ENCODE measurements at regions of chr7 and their contacts with region 1.

Region 1: DNA sequence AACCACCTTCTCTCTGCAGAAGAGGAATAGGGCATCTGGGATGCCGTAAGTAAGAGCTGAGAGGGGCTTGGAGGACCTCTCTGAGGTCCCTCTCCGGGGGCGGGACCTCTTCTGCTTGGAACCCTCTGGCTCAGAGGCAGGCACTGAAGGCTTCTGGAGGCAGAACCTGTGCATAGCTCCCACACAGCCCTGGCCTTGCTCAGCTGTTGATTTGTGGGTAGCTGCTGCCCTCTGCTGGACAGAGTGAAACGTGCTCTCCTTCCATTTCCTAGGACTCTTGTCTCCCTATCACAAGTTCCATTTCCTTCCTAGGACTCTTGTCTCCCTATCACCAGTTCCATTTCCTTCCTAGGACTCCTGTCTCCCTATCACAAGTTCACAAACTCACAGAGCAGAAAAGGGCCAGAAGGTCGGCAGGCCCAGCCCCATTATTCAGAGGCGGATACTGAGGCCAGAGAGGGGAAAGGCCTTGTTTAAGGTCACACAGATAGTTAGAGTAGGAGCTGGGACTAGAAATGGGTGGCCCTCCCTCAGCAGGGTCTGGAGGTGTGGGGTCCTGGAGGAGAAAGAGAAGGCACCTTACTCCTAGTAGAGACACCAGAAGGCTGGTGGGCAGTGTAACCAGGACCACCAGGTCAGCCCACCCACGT is 30.3 kb upstream of the GARS1 start:
- DNase-seq: peak; percentile 72 to 81
- ATAC-seq: peak; percentile 88 to 94 (median 93)
- H3K4me3 ChIP-seq: no peak overlapping the region
- H3K27ac ChIP-seq: no peak overlapping the region
- H3K4me1 ChIP-seq: peaks cover 0 to 21% (median 0%) of the 10 kb centered on the region in 9 donors
- H3K27me3 ChIP-seq: no peaks in the 10 kb centered on the region
- CTCF ChIP-seq: peak; percentile 69 to 89 (median 86)

Region 2: DNA sequence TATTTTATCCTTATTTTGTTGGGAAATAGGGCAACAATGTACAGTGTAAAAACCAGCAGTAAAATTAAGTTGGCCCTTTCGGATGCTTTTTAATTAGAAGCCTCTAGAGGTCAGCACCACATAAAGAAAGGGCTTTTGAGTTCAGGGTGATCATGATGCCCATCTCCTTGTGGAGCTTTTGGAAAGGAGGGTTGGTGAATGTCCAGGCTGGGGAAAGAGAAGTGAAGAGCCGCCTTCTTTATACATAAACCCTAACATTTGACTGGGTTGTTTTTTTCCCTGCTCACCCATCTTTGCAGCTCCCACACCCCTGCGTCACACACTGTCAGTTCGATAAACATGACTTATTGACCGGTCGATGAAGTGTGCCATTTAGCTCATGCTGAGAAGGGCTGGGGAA is 399.8 kb before region 1 on chr7:
- intact Hi-C with region 1: loop called in 9 of 10 experiments (anchors 2 to 10 kb)
- DNase-seq: no peak
- ATAC-seq: peak; percentile 11 to 73 (median 64)
- H3K4me3 ChIP-seq: no peak overlapping the region
- H3K27ac ChIP-seq: peak overlapping the region in 3 of 10 donors; percentile 33 to 76 (median 57)
- H3K4me1 ChIP-seq: peaks cover 0 to 82% (median 30%) of the 10 kb centered on the region in 9 donors
- H3K27me3 ChIP-seq: no peaks in the 10 kb centered on the region
- CTCF ChIP-seq: peak; percentile 33 to 76 (median 70)

Region 3: GRCh38 chr7:30255064-30255769 is 309.2 kb before region 1 on chr7:
- intact Hi-C with region 1: no loop called
- DNase-seq: no peak
- ATAC-seq: peak in 3 of 8 donors; percentile 19 to 45 (median 34)
- H3K4me3 ChIP-seq: no peak overlapping the region
- H3K27ac ChIP-seq: no peak overlapping the region
- H3K4me1 ChIP-seq: peaks cover 0 to 34% (median 22%) of the 10 kb centered on the region in 9 donors
- H3K27me3 ChIP-seq: no peaks in the 10 kb centered on the region
- CTCF ChIP-seq: no peak

Region 4: DNA sequence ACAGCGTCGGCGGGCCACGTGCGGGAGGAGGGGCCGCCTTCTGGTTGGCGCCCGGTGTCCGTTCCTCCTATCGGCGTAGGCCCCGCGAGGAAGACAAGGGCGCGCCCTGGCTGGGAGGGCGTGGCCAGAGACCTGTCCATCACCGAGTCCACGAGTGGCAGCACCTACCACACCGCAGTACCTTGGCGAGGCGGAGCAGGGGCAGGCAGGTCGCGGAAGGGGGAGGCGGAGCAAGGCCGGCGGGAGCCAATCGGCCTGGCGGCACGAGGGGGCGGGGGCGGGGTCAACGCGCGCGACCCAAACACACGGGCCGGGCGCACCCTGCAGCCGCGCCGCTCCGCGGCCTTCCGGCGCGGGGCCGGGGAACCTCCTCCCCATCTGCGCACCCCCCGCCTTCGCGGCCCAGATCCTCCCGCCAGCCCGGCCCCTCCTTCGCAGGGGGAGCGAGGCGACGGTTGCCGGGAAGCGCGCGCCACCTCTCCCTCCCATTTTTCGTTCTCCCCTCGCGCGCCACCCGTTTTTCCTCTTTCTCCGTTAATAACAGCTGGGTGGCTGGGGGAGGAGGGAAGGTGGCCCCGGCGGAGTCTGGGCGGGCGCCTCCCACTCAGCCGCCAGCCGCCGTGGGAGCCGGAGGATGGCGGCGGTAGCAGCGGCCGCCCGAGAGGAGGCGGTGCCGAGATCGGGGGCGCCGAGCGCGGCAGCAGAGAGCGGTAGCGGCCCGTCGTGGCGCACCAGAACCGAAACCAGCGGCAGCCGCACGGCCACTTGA is 279.9 kb before region 1 on chr7 and contains the start of gene ZNRF2:
- intact Hi-C with region 1: loop called in 9 of 10 experiments (anchors 5 to 10 kb)
- DNase-seq: peak; percentile 98
- ATAC-seq: peak; percentile 92 to 99 (median 98)
- H3K4me3 ChIP-seq: peak within 1 kb of the TSS; percentile 45 to 95 (median 81)
- H3K27ac ChIP-seq: peak within 1 kb of the TSS; percentile 83 to 99 (median 98)
- H3K4me1 ChIP-seq: peaks cover 4 to 42% (median 29%) of the 10 kb centered on the region in 9 donors
- H3K27me3 ChIP-seq: no peaks in the 10 kb centered on the region
- CTCF ChIP-seq: peak; percentile 11 to 83 (median 53)
- total RNA-seq, gene ZNRF2: 5.3 to 13.8 (median 8.8) TPM

Region 5: GRCh38 chr7:30433082-30433481 is 131.3 kb before region 1 on chr7:
- intact Hi-C with region 1: loop called in 1 of 10 experiments (anchors 10 kb)
- DNase-seq: peak; percentile 38 to 52
- ATAC-seq: peak; percentile 70 to 84 (median 78)
- H3K4me3 ChIP-seq: no peak overlapping the region
- H3K27ac ChIP-seq: peak overlapping the region in 6 of 10 donors; percentile 0 to 81 (median 54)
- H3K4me1 ChIP-seq: peaks cover 9 to 87% (median 34%) of the 10 kb centered on the region in 9 donors
- H3K27me3 ChIP-seq: no peaks in the 10 kb centered on the region
- CTCF ChIP-seq: no peak

Region 6: GRCh38 chr7:30548762-30549344 is 15.5 kb before region 1 on chr7:
- intact Hi-C with region 1: loop called in 4 of 10 experiments (anchors 1 to 2 kb)
- DNase-seq: peak; percentile 26 to 75
- ATAC-seq: peak; percentile 50 to 85 (median 78)
- H3K4me3 ChIP-seq: no peak overlapping the region
- H3K27ac ChIP-seq: peak overlapping the region in 8 of 10 donors; percentile 61 to 84 (median 67)
- H3K4me1 ChIP-seq: peaks cover 0 to 34% (median 22%) of the 10 kb centered on the region in 9 donors
- H3K27me3 ChIP-seq: no peaks in the 10 kb centered on the region
- CTCF ChIP-seq: peak; percentile 64 to 90 (median 85)

Region 7: DNA sequence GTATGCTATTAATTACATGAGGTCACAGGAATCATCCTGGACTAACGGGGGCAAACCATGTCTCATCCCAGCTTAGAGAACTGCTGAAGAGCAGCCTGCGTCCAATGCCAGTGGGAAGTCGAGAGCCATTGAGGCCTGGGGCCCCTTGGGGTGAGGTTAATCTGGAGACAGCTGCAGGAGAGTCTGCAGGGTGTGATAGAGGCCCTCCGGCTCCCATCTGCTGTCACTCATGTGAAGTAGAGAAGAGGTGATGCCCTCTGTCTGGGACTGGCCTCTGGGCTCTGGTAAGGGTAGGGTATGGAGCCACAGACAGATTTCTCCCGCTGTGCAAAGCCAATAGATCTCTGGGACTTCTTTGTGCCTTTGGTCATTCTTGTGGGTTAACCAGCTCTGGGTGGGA is 83.2 kb after region 1 on chr7:
- intact Hi-C with region 1: no loop called
- DNase-seq: no peak
- ATAC-seq: no peak
- H3K4me3 ChIP-seq: no peak overlapping the region
- H3K27ac ChIP-seq: no peak overlapping the region
- H3K4me1 ChIP-seq: no peaks in the 10 kb centered on the region
- H3K27me3 ChIP-seq: no peaks in the 10 kb centered on the region
- CTCF ChIP-seq: no peak

Region 8: GRCh38 chr7:30842542-30843451 is 278.4 kb after region 1 on chr7:
- intact Hi-C with region 1: no loop called
- DNase-seq: no peak
- ATAC-seq: peak in 2 of 8 donors; percentile 7 to 34
- H3K4me3 ChIP-seq: no peak overlapping the region
- H3K27ac ChIP-seq: peak overlapping the region in 1 of 10 donors; percentile 29
- H3K4me1 ChIP-seq: peaks cover 0 to 59% (median 41%) of the 10 kb centered on the region in 9 donors
- H3K27me3 ChIP-seq: no peaks in the 10 kb centered on the region
- CTCF ChIP-seq: no peak

Measured in heart right ventricle (tissue), 16 donors.